Mammary epithelial cell (primary cell): ENCODE measurements at regions of chr7 and their contacts with region 1.

Region 1: GRCh38 chr7:105149827-105150226 is 135.8 kb downstream of the KMT2E start:
- DNase-seq: peak; percentile 79
- H3K4me3 ChIP-seq: no peak overlapping the region
- H3K27ac ChIP-seq: peak overlapping the region; percentile 30
- H3K4me1 ChIP-seq: peaks cover 10% of the 10 kb centered on the region
- H3K27me3 ChIP-seq: no peaks in the 10 kb centered on the region
- CTCF ChIP-seq: no peak

Region 2: GRCh38 chr7:105118612-105119600 is 30.9 kb before region 1 on chr7:
- CTCF ChIA-PET with region 1: no interaction called
- dilution Hi-C with region 1: loop called (anchors 5 kb)
- in situ Hi-C with region 1: no loop called
- intact Hi-C with region 1: no loop called
- DNase-seq: no peak
- H3K4me3 ChIP-seq: no peak overlapping the region
- H3K27ac ChIP-seq: no peak overlapping the region
- H3K4me1 ChIP-seq: no peaks in the 10 kb centered on the region
- H3K27me3 ChIP-seq: no peaks in the 10 kb centered on the region
- CTCF ChIP-seq: no peak

Region 3: GRCh38 chr7:105268511-105269392 is 118.9 kb after region 1 on chr7:
- CTCF ChIA-PET with region 1: no interaction called
- dilution Hi-C with region 1: no loop called
- in situ Hi-C with region 1: no loop called
- intact Hi-C with region 1: loop called (anchors 5 kb)
- DNase-seq: peak; percentile 62
- H3K4me3 ChIP-seq: peak overlapping the region; percentile 67 to 79 (median 69)
- H3K27ac ChIP-seq: peak overlapping the region; percentile 94
- H3K4me1 ChIP-seq: no peaks in the 10 kb centered on the region
- H3K27me3 ChIP-seq: no peaks in the 10 kb centered on the region
- CTCF ChIP-seq: no peak